Gastrocnemius medialis (tissue), 4 donors: ENCODE measurements at regions of chr12 and their contacts with region 1.

Region 1: DNA sequence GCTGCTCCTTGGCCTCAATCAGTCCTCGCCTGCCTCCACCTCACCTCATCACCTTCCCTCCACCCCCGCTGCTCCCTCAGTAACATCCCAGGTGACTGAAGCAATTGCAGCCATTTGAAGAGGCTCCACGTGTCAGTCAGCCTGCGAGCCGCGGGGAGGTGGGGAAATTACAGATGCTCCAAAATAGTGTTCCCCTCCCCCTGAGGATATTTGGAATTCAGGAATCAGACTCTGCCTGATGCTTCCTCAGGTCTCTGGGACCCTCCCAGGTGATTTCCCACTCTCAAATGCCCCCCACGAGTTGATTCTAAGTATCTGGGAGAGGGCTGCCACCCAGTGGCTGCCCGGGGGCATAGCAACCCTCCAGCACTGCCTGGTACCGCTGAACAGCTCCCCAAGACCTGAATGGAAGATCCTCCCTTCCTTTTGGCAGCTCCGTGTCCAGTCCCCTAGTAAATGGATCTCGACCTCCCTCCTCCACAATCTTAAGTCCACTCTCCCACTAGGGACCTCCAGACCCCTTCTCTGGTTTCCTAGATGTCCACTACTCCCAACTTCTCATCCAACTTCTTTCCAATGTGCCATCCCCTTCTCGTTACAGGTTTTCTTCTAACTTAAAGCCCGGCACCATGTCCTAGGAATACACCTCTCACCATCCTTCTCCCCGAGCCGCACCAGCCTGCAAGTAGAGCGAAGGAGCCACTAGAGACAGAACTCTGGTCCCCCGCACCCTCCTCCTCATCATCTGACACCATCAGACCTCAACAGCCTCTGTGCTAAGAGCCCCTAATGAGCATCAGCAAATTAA is 1.4 kb upstream of the ASIC1 start:
- DNase-seq: no peak
- ATAC-seq: peak; percentile 21 to 44
- H3K4me3 ChIP-seq: no peak overlapping the region
- H3K27ac ChIP-seq: no peak overlapping the region
- H3K4me1 ChIP-seq: peaks cover 14 to 15% of the 10 kb centered on the region in 2 donors
- H3K27me3 ChIP-seq: peaks cover 3 to 11% (median 4%) of the 10 kb centered on the region in 3 donors
- CTCF ChIP-seq: peak; percentile 68 to 89 (median 85)
- POLR2A ChIP-seq: no peak

Region 2: GRCh38 chr12:49866859-49867579 is 189.0 kb before region 1 on chr12:
- in situ Hi-C with region 1: no loop called
- intact Hi-C with region 1: loop called (anchors 10 kb)
- DNase-seq: peak in 1 of 2 donors; percentile 57
- ATAC-seq: peak; percentile 43 to 73
- H3K4me3 ChIP-seq: no peak overlapping the region
- H3K27ac ChIP-seq: no peak overlapping the region
- H3K4me1 ChIP-seq: peaks cover 10 to 19% of the 10 kb centered on the region in 2 donors
- H3K27me3 ChIP-seq: no peaks in the 10 kb centered on the region
- CTCF ChIP-seq: peak; percentile 79 to 97 (median 90)
- POLR2A ChIP-seq: no peak

Region 3: GRCh38 chr12:49967042-49967776 is 88.8 kb before region 1 on chr12:
- in situ Hi-C with region 1: loop called in 2 of 4 experiments (anchors 5 kb)
- intact Hi-C with region 1: loop called (anchors 2 kb)
- DNase-seq: peak; percentile 48 to 64
- ATAC-seq: peak; percentile 76 to 86
- H3K4me3 ChIP-seq: peak overlapping the region; percentile 36 to 50 (median 40)
- H3K27ac ChIP-seq: no peak overlapping the region
- H3K4me1 ChIP-seq: peaks cover 0 to 5% of the 10 kb centered on the region in 2 donors
- H3K27me3 ChIP-seq: peaks cover 4 to 22% (median 17%) of the 10 kb centered on the region in 3 donors
- CTCF ChIP-seq: peak; percentile 66 to 91 (median 88)
- POLR2A ChIP-seq: no peak

Region 4: GRCh38 chr12:49974231-49974675 is 81.8 kb before region 1 on chr12:
- in situ Hi-C with region 1: loop called in 3 of 4 experiments (anchors 5 kb)
- intact Hi-C with region 1: no loop called
- DNase-seq: peak; percentile 20 to 35
- ATAC-seq: peak; percentile 51 to 56
- H3K4me3 ChIP-seq: no peak overlapping the region
- H3K27ac ChIP-seq: no peak overlapping the region
- H3K4me1 ChIP-seq: no peaks in the 10 kb centered on the region
- H3K27me3 ChIP-seq: peaks cover 0 to 7% (median 0%) of the 10 kb centered on the region in 3 donors
- CTCF ChIP-seq: peak in 2 of 5 experiments; percentile 23 to 30
- POLR2A ChIP-seq: no peak

Region 5: DNA sequence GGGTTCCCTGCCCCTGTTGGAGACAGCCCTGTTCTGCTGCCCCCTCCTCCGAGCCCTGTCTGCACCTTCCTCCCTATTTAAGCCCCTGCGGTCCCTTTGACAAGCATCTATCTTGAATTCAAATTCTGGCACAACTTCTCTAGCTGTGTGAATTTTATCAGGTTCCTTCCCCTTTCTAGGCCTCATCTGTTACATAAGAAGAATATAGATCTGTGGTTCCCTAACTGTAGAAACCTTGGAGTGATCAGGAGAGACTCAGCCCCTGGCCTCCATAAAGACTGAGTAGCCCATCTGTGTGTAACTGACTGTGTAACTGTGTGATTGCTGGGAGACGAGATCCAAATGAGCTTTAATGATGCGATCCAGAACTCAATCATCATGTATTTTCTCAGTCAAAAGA is 17.7 kb before region 1 on chr12:
- in situ Hi-C with region 1: no loop called
- intact Hi-C with region 1: loop called (anchors 2 kb)
- DNase-seq: no peak
- ATAC-seq: no peak
- H3K4me3 ChIP-seq: no peak overlapping the region
- H3K27ac ChIP-seq: no peak overlapping the region
- H3K4me1 ChIP-seq: no peaks in the 10 kb centered on the region
- H3K27me3 ChIP-seq: peaks cover 0 to 7% (median 0%) of the 10 kb centered on the region in 3 donors
- CTCF ChIP-seq: no peak
- POLR2A ChIP-seq: no peak